SK-N-SH (cell line): ENCODE measurements at regions of chr16 and their contacts with region 1.

Region 1: DNA sequence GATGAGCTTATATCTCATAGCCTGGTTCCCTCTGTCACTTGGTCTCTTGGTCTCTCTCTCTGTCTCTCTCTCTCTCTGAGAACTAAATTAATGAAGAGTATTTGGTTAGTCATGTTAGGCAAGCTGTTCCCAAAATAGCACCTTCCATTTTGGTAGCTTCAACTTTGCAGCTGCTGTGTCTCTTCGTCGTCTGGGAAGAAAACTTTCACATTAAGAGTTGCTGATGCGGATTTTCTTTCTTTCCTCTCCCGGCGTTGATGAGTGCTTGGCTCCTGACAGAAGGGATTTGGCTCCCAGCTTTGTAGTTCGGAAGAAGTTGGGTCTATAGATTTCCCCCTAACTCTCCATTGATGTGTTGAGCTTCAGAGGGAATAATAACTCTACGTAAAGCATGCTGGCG is at the start of gene RBFOX1:
- DNase-seq: no peak
- H3K4me3 ChIP-seq: no peak within 1 kb of the TSS
- H3K27ac ChIP-seq: no peak within 1 kb of the TSS
- H3K4me1 ChIP-seq: no peaks in the 10 kb centered on the region; a peak in 1 of 4 replicates
- H3K27me3 ChIP-seq: no peaks in the 10 kb centered on the region
- CTCF ChIP-seq: no peak
- EP300 ChIP-seq: no peak
- RAD21 ChIP-seq: no peak
- polyA plus RNA-seq, gene RBFOX1: not detected in 2 replicates

Region 2: GRCh38 chr16:7294020-7294419 is 38.6 kb before region 1 on chr16:
- CTCF ChIA-PET with region 1: no interaction called
- POLR2A ChIA-PET with region 1: no interaction called
- DNase-seq: no peak
- H3K4me3 ChIP-seq: no peak overlapping the region
- H3K27ac ChIP-seq: no peak overlapping the region
- H3K4me1 ChIP-seq: no peaks in the 10 kb centered on the region
- H3K27me3 ChIP-seq: no peaks in the 10 kb centered on the region
- CTCF ChIP-seq: no peak
- EP300 ChIP-seq: no peak
- RAD21 ChIP-seq: no peak

Region 3: DNA sequence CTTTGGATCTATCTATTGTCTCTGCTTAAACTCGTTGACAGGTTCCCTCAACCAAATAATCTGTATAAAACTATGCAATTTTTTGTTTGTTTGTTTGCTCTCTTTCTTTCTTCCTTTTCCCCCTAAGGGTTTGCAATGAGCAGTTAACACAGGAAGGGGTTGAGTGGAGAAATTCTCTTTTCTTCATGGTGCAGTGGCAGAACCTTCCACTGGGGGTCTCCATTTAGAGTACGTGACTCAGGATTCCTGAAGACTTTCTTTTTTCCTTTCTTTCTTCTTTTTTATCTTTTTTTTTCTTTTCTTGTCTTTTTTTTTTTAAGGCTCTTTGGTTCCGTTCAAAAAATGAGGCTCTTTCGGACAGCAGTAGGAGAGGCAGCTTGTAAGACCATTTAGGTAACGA is 19.4 kb before region 1 on chr16:
- CTCF ChIA-PET with region 1: interaction called, 20 read pairs
- POLR2A ChIA-PET with region 1: no interaction called
- DNase-seq: peak; percentile 43
- H3K4me3 ChIP-seq: no peak overlapping the region
- H3K27ac ChIP-seq: no peak overlapping the region
- H3K4me1 ChIP-seq: no peaks in the 10 kb centered on the region; a peak in 1 of 4 replicates
- H3K27me3 ChIP-seq: no peaks in the 10 kb centered on the region
- CTCF ChIP-seq: peak; percentile 28; the same call in 1 of the 2 replicates
- EP300 ChIP-seq: no peak
- RAD21 ChIP-seq: peak; percentile 53

Region 4: GRCh38 chr16:7344830-7345780 is 12.5 kb after region 1 on chr16:
- CTCF ChIA-PET with region 1: no interaction called
- POLR2A ChIA-PET with region 1: no interaction called
- DNase-seq: peak; percentile 59
- H3K4me3 ChIP-seq: no peak overlapping the region
- H3K27ac ChIP-seq: peak overlapping the region in 1 of 2 experiments; percentile 80; a peak in 2 of 4 replicates
- H3K4me1 ChIP-seq: peaks cover 0 to 11% of the 10 kb centered on the region in 2 experiments; a peak in 1 of 4 replicates
- H3K27me3 ChIP-seq: no peaks in the 10 kb centered on the region
- CTCF ChIP-seq: no peak
- EP300 ChIP-seq: 0 out of 4 replicates have a peak, but pooled peaks of 1 of the 2 experiments have one; percentile 39
- RAD21 ChIP-seq: peak; percentile 57